Activated CD4-positive, alpha-beta memory T cell treated with anti-CD3 and anti-CD28 coated beads for 36 hours (primary cell): ENCODE measurements at regions of chr1 and their contacts with region 1.

Region 1: GRCh38 chr1:52636721-52637695 is 4.0 kb downstream of the SHISAL2A start:
- DNase-seq: peak; percentile 86
- H3K4me3 Mint-ChIP-seq: peak overlapping the region; percentile 65
- H3K27ac Mint-ChIP-seq: peak overlapping the region; percentile 98
- H3K4me1 Mint-ChIP-seq: peaks cover 75% of the 10 kb centered on the region
- H3K27me3 Mint-ChIP-seq: no peaks in the 10 kb centered on the region

Region 2: DNA sequence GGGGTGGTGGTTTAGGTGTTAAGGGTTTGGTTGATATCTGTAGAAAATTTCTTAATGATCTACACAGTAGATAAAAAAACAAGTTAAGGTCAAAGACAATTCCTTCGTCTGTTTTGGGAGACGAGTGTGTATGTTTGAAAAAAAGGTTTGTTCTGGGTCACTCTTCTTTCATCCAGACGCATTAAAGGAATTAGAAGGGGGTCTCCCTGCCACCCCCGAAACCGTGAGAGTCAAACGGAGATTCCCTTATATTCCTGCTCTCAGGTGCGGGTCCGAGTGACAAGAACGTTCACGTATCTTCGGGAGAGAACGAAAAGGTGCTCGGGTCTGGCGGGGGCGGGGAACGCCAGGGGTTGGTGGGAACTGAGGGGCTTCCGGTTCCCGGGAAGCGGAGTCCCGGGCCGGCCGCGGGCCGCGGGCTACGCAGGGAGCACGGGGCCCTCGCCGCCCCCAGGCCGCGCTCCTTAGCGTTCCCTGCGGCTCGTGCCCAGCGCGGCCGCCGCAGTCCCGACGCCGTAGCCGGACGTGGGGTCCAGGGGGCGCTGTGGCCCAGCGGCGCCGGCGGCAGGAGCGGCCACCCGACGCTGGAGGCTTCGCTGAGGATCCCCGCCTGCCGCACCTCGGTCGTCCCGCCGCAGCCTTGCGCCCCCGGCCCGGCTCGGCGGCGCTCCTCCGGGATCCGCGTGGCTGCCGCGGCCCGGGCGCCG is 495.3 kb before region 1 on chr1 and contains the start of gene ZFYVE9:
- CTCF ChIA-PET with region 1: no interaction called
- POLR2A ChIA-PET with region 1: interaction called, 3 read pairs
- intact Hi-C with region 1: loop called (anchors 10 kb)
- DNase-seq: peak; percentile 75
- H3K4me3 Mint-ChIP-seq: peak within 1 kb of the TSS; percentile 80
- H3K27ac Mint-ChIP-seq: no peak within 1 kb of the TSS
- H3K4me1 Mint-ChIP-seq: peaks cover 39% of the 10 kb centered on the region
- H3K27me3 Mint-ChIP-seq: peaks cover 3% of the 10 kb centered on the region
- total RNA-seq, gene ZFYVE9: 2.6 to 2.9 TPM

Region 3: GRCh38 chr1:52424231-52424636 is 212.8 kb before region 1 on chr1:
- CTCF ChIA-PET with region 1: no interaction called
- POLR2A ChIA-PET with region 1: no interaction called
- intact Hi-C with region 1: loop called (anchors 5 kb)
- DNase-seq: peak; percentile 34
- H3K4me3 Mint-ChIP-seq: peak overlapping the region; percentile 7
- H3K27ac Mint-ChIP-seq: peak overlapping the region; percentile 77
- H3K4me1 Mint-ChIP-seq: peaks cover 45% of the 10 kb centered on the region
- H3K27me3 Mint-ChIP-seq: no peaks in the 10 kb centered on the region

Region 4: GRCh38 chr1:52659356-52659755 is 22.3 kb after region 1 on chr1:
- CTCF ChIA-PET with region 1: no interaction called
- POLR2A ChIA-PET with region 1: interaction called, 7 read pairs
- intact Hi-C with region 1: loop called (anchors 1 kb)
- DNase-seq: peak; percentile 66
- H3K4me3 Mint-ChIP-seq: peak overlapping the region; percentile 46
- H3K27ac Mint-ChIP-seq: peak overlapping the region; percentile 85
- H3K4me1 Mint-ChIP-seq: peaks cover 21% of the 10 kb centered on the region
- H3K27me3 Mint-ChIP-seq: no peaks in the 10 kb centered on the region

Region 5: DNA sequence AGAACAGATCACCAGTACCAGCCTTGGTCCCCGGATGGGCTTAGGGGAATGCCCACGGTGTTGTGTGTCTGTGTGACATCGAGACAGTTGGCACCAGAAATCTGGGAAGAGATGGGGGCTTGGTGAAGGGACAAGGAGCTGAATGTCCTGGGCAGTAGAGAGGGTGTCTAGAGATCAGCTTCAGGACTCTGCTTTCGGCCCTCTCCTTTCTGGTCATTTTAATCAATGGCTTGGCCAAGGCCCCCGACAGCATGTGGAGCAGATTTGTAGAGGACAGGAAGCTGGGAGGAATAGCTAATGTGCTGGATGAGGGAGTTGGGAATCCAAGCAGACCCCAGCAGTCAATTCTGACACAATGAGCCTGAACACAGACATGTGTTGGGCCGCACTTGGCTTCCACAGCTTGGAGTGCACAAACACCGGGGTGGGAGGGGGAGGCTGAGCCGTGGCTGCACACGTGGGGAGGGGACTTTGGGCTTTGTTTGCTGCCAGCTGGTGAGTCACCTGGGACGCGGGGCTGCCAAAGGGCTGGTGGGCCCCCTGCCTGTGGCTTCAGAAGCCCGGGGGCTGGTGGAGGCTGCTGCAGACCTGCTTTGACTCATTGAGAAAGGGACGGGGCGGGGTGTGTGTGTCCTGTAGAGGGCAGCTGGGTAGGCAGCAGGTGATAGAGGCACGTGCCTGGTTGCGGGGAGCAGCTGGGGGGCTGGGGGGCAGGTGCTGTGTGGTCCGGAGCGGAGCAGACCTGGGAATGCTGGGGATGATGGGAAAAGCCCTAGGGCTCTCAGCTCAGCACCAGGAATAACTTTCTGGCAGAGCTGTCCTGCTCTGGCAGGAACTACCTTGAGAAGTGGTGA is 484.5 kb after region 1 on chr1:
- CTCF ChIA-PET with region 1: no interaction called
- POLR2A ChIA-PET with region 1: no interaction called
- intact Hi-C with region 1: no loop called
- DNase-seq: peak; percentile 19
- H3K4me3 Mint-ChIP-seq: no peak overlapping the region
- H3K27ac Mint-ChIP-seq: no peak overlapping the region
- H3K4me1 Mint-ChIP-seq: no peaks in the 10 kb centered on the region
- H3K27me3 Mint-ChIP-seq: peaks cover 12% of the 10 kb centered on the region